Ascending aorta (tissue), 2 donors: ENCODE measurements at regions of chr7 and their contacts with region 1.

Region 1: DNA sequence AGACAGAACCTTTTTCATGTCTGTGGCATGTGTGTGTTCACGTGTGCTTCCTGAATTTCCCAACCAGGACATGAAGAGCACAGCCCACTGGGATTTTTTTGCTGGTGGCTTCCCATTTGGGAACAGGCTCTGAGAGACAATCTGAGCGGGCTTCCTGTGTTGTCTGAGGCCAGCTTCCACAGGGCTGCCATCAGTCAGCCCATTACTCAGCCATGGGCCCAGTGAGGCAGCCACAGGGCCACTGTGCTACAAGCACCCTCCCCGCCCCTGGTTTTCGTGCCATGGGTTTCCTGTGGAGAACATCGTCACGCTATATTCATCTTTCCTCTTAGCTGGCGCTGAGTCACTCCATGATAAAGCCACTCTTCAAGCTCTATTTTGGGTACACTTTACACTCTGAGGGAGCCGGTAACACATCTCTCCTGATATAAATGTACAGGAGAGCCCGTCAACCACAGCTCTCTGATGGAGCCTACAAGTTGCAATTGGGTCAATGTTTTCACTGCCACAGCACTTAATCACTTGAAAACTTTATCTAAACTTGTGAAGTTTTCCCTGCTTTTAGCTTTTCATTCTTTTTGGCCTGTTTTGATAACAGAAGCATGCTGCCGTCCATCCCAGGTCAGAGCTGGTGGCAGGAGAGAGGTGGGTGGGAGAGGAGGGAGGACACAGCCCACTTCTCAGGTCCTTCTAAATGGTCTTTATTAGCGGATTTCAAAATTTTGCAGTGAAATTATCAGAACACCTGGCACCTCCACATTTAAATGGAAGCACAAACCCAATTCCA is 96.9 kb downstream of the HIPK2 start:
- DNase-seq: peak; percentile 87 to 94
- H3K4me3 ChIP-seq: no peak overlapping the region
- H3K27ac ChIP-seq: peak overlapping the region; percentile 86 to 93
- H3K4me1 ChIP-seq: peaks cover 11 to 47% of the 10 kb centered on the region in 2 donors
- H3K27me3 ChIP-seq: no peaks in the 10 kb centered on the region
- CTCF ChIP-seq: no peak

Region 2: GRCh38 chr7:139731802-139732470 is 51.1 kb after region 1 on chr7:
- intact Hi-C with region 1: loop called (anchors 2 kb)
- DNase-seq: peak; percentile 76 to 98
- H3K4me3 ChIP-seq: peak overlapping the region; percentile 24 to 37
- H3K27ac ChIP-seq: peak overlapping the region; percentile 96
- H3K4me1 ChIP-seq: peaks cover 35 to 71% of the 10 kb centered on the region in 2 donors
- H3K27me3 ChIP-seq: no peaks in the 10 kb centered on the region
- CTCF ChIP-seq: no peak

Region 3: DNA sequence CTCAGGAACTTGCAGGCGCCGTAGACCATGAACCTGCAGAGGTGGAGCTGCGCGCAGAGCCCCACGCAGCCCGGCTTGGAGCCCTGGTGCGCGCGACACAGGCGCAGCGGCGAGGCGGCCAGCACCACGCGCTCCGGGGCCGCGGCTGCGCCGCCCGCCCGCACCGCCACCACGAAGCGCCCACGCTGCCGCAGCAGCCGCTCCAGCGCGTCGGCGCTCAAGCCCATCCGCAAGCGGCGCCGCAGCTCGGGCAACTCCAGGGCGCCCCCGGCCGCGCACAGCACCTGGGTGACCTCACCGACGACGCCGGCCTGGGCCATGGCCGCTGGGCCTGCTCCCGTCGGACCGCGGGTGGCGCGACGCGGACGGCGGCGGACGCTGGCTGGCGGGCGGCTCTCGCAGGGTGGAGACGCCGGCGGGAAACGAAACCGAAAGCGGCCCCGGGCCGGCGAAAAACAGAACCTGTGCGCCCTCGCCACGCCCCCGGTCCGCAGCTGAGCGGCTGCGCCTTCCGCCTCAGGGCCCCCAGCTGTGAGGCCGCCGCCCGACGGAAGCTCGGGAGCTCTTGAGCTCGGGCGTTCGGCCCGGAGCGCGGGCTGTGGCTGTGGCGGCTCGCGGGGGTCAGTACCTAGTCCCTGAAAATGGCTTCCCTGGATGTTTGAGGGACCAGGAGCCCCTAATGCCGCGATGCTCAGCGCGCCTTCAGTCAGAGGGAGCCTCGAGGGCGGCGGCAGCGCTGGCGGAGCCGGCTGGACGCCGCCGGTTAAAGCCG is 381.8 kb after region 1 on chr7 and contains the start of gene PARP12:
- intact Hi-C with region 1: loop called (anchors 5 kb)
- DNase-seq: peak in 1 of 2 donors; percentile 89
- H3K4me3 ChIP-seq: peak within 1 kb of the TSS; percentile 87 to 89
- H3K27ac ChIP-seq: peak within 1 kb of the TSS; percentile 91 to 92
- H3K4me1 ChIP-seq: peaks cover 0 to 23% of the 10 kb centered on the region in 2 donors
- H3K27me3 ChIP-seq: no peaks in the 10 kb centered on the region
- CTCF ChIP-seq: peak in 1 of 3 experiments; percentile 7
- total RNA-seq, gene PARP12: 54.6 TPM